Activated CD4-positive, alpha-beta T cell treated with anti-CD3 and anti-CD28 coated beads, Interleukin-2, amount 10 ng/mL, durations not matched to agents 7 days and 5 days (primary cell): ENCODE measurements at regions of chr15 and their contacts with region 1.

Region 1: DNA sequence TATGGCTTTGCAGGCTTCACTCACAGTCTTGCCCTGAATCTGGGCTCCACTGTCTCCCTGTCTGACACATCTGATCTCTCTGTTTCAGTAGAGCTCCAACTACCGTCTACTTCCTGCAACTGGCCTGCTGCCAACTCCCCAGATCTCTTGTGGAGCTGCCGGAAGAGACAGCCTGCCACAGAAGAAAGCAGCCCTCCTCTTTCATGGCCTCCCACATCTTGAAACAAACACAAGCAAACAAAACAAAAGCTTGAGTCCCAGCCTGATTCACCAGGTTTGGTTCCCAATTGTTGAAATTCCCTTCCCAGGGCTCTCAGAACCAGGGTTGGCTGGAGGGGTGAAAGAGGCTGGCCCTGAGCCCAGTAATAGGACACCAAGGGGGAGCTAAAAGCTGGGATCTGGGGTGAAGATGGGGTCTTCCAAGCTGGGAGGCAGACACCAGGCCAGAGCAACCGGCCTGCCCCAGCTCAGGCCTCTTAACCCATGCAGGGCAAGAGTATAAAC is 55.3 kb upstream of the CA12 start:
- DNase-seq: peak; percentile 90
- H3K4me3 Mint-ChIP-seq: no peak overlapping the region
- H3K27ac Mint-ChIP-seq: peak overlapping the region; percentile 88
- H3K4me1 Mint-ChIP-seq: peaks cover 50% of the 10 kb centered on the region
- H3K27me3 Mint-ChIP-seq: no peaks in the 10 kb centered on the region

Region 2: DNA sequence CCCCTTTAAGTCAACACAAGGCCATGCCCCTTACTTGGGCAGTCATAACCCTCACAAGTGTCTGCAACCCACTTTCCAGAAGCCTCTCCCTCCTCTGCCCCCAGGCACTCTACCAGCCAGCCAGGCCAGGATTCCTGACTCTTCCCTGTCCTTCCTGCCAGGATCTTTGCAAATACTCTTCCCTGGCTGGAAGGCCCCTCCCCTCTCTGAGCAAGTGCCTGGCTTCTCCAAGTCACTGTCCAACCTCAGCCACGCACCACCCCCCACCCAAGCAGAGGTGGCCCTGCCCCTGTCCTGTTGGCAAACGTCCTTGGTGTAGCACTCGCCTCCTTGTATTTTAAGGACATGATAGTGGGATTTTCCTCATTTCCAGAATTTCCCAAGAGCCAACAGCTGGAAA is 12.8 kb after region 1 on chr15:
- CTCF ChIA-PET with region 1: interaction called, 20 read pairs
- POLR2A ChIA-PET with region 1: no interaction called
- DNase-seq: no peak
- H3K4me3 Mint-ChIP-seq: no peak overlapping the region
- H3K27ac Mint-ChIP-seq: no peak overlapping the region
- H3K4me1 Mint-ChIP-seq: peaks cover 23% of the 10 kb centered on the region
- H3K27me3 Mint-ChIP-seq: peaks cover 6% of the 10 kb centered on the region